Transverse colon (tissue), 4 donors: ENCODE measurements at regions of chr4 and their contacts with region 1.

Region 1: GRCh38 chr4:12186526-12186925 is 757.8 kb upstream of the HS3ST1 start:
- DNase-seq: no peak
- H3K4me3 ChIP-seq: no peak overlapping the region
- H3K27ac ChIP-seq: no peak overlapping the region
- H3K4me1 ChIP-seq: no peaks in the 10 kb centered on the region
- H3K27me3 ChIP-seq: no peaks in the 10 kb centered on the region
- CTCF ChIP-seq: no peak
- EP300 ChIP-seq: no peak
- POLR2A ChIP-seq: no peak

Region 2: DNA sequence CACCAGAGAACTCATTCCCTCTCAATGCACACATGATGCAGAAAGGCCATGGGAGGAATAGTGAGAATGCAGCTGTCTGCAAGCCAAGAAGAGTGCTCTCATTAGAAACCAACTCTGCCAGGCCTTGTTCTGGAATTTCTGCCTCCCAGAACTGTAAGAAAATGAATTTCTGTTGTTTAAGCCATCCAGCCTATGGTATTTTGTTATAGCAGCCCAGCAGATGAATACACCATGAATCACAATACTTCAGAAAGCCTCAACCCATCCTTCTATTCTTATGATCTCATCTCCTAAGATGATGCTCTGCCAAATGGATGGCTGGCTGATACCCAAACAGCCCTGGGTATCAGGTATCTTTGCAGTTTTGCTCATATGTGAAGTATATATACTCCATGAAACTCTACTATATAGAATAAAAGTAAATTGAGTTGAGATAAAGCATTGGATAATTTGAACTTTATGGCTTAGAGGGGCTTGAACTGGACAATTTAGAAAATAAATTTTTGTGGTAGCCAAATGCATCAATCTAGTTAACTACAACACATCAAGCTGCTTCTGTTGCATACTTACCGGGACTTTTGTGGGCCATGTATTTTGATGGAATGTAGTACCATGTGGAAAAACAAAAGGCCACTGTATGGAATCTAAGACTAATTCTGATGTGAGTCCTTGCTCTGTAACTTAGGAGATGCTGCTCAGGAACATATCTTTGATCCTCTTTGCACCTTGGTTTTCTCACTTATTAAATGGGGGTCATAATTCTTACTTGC is 1003.8 kb before region 1 on chr4:
- in situ Hi-C with region 1: no loop called
- intact Hi-C with region 1: loop called (anchors 5 kb)
- DNase-seq: no peak
- H3K4me3 ChIP-seq: no peak overlapping the region
- H3K27ac ChIP-seq: no peak overlapping the region
- H3K4me1 ChIP-seq: no peaks in the 10 kb centered on the region
- H3K27me3 ChIP-seq: no peaks in the 10 kb centered on the region
- CTCF ChIP-seq: no peak
- EP300 ChIP-seq: no peak
- POLR2A ChIP-seq: no peak

Region 3: GRCh38 chr4:11685481-11685880 is 501.0 kb before region 1 on chr4:
- in situ Hi-C with region 1: no loop called
- intact Hi-C with region 1: no loop called
- DNase-seq: no peak
- H3K4me3 ChIP-seq: no peak overlapping the region
- H3K27ac ChIP-seq: no peak overlapping the region
- H3K4me1 ChIP-seq: no peaks in the 10 kb centered on the region
- H3K27me3 ChIP-seq: no peaks in the 10 kb centered on the region
- CTCF ChIP-seq: no peak
- EP300 ChIP-seq: no peak
- POLR2A ChIP-seq: no peak